Aorta (tissue), 5 donors: ENCODE measurements at regions of chr19 and their contacts with region 1.

Region 1: DNA sequence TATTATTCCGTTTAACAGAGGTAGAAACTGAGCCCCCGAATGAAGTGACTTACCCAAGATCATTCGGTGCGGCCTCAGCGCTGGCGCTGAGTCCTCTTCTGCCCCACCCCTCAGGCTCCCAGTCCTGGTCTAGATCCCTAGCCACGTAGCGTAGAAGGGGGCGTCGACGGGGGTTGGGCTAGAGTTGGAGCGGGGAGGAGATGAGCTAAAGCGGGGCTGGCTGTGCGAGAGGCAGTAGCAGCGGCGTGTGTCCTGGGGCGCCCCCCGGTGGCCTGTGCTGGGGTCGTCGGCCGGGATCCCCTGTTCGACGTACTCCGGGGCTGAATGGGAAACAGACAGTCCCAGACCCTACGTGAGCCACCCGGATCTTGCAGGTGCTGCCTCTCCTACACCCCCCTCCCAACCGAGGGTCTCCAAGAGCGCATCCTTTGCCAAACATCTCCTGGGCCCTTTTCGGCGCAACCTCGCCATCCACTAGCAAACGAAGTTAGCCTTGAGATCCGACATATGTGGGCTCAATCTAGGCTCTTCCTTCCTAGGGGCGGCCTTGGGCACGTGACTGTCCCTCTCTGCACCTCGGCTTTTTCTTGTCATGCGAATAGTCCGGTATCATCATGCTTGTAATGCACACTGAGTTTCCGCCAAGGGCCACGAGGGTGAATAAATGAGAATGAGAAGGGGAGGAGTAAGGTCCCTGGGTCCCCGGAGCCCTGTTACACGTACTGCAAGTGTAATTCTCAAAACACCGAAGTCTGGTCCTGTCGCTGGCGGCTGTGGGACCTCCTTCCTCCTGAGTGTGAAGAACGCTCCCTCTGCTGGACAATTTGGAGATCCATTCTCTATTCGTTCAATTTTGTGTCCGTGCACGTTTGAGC is 47.7 kb downstream of the CYP4F22 start:
- DNase-seq: peak; percentile 94 to 98
- ATAC-seq: peak; percentile 93
- H3K4me3 ChIP-seq: peak overlapping the region in 1 of 2 donors; percentile 50
- H3K27ac ChIP-seq: peak overlapping the region in 1 of 2 donors; percentile 73
- H3K4me1 ChIP-seq: no peaks in the 10 kb centered on the region
- H3K27me3 ChIP-seq: no peaks in the 10 kb centered on the region

Region 2: GRCh38 chr19:15091901-15092753 is 463.9 kb before region 1 on chr19:
- intact Hi-C with region 1: loop called (anchors 2 to 5 kb)
- DNase-seq: no peak
- ATAC-seq: peak; percentile 76
- H3K4me3 ChIP-seq: no peak overlapping the region
- H3K27ac ChIP-seq: no peak overlapping the region
- H3K4me1 ChIP-seq: no peaks in the 10 kb centered on the region
- H3K27me3 ChIP-seq: no peaks in the 10 kb centered on the region

Region 3: DNA sequence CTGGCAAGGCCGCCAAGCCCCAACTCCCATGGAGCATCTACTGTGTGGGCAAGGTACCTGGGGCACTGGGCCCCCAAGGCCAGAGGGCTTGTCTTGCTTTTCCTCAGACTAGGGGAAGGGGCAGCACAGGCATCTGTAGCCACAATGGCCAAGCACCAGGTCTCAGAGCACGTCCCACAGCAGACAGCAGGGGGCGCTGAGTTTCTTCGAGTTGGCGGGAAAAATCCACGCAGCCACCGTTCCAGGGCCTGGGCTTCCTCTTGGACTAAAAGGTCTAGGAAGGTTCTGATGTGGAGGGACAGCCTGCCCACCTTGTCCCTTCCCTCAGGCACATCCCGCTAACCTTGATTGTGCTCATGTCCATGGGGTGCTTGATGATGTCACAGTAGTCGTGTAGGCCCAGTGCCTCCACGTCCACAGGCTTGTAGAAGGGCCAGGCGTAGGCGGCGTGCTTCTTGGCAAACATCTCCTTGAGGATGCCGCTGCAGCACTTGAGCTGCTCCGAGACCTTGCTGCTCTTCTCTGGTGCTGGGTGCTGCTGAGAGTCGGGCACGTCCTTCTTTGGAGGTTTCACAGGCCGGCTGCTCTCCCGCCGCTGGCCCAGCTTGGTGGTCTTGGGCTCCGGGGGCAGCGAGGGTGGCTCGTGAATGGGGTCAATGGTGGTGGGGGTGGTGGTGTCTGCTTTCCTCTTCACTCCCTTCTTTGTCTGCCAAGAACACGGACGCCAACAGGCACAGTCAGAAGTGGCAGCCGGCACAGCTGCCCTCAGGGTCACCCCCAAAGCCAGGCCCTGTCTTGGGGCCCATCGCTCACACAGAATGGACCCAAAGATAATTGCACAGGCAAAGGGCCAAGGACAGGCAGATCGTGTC is 291.7 kb before region 1 on chr19:
- intact Hi-C with region 1: loop called (anchors 2 to 5 kb)
- DNase-seq: peak; percentile 86 to 94
- ATAC-seq: peak; percentile 63
- H3K4me3 ChIP-seq: no peak overlapping the region
- H3K27ac ChIP-seq: peak overlapping the region in 1 of 2 donors; percentile 39
- H3K4me1 ChIP-seq: no peaks in the 10 kb centered on the region
- H3K27me3 ChIP-seq: no peaks in the 10 kb centered on the region

Region 4: GRCh38 chr19:15418588-15419412 is 137.2 kb before region 1 on chr19 and contains the start of gene AKAP8L:
- intact Hi-C with region 1: loop called (anchors 5 to 10 kb)
- DNase-seq: peak; percentile 99
- ATAC-seq: peak; percentile 97
- H3K4me3 ChIP-seq: peak within 1 kb of the TSS; percentile 77 to 86
- H3K27ac ChIP-seq: peak within 1 kb of the TSS; percentile 62 to 93
- H3K4me1 ChIP-seq: no peaks in the 10 kb centered on the region
- H3K27me3 ChIP-seq: no peaks in the 10 kb centered on the region
- total RNA-seq, gene AKAP8L: 70.8 to 106 TPM

Region 5: GRCh38 chr19:15463861-15464371 is 92.1 kb before region 1 on chr19:
- intact Hi-C with region 1: loop called in 1 of 2 experiments (anchors 5 kb)
- DNase-seq: peak in 1 of 2 donors; percentile 66
- ATAC-seq: peak; percentile 50
- H3K4me3 ChIP-seq: no peak overlapping the region
- H3K27ac ChIP-seq: no peak overlapping the region
- H3K4me1 ChIP-seq: no peaks in the 10 kb centered on the region
- H3K27me3 ChIP-seq: no peaks in the 10 kb centered on the region

Region 6: DNA sequence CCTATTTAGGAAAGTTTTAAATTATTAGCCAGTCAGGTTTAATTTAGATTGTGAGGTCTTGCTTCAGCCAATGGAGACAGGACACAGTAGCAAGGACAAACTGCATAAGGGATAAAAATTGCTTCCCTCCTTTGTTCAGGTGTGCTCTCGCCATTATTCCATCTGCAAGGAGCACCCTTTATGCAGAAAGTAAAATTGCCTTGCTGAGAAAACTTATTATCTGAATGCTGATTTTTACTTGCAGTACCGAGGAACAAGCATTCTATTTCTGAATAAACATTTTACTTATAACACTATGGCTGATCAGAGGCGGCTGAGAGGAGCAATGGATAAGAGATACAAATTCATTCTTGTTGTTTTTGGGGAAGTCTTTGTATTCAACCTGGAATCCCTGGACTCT is 39.6 kb before region 1 on chr19:
- intact Hi-C with region 1: no loop called
- DNase-seq: no peak
- ATAC-seq: no peak
- H3K4me3 ChIP-seq: no peak overlapping the region
- H3K27ac ChIP-seq: no peak overlapping the region
- H3K4me1 ChIP-seq: no peaks in the 10 kb centered on the region
- H3K27me3 ChIP-seq: no peaks in the 10 kb centered on the region

Region 7: GRCh38 chr19:15587663-15588062 is 31.7 kb after region 1 on chr19:
- intact Hi-C with region 1: no loop called
- DNase-seq: peak in 1 of 2 donors; percentile 70
- ATAC-seq: no peak
- H3K4me3 ChIP-seq: no peak overlapping the region
- H3K27ac ChIP-seq: no peak overlapping the region
- H3K4me1 ChIP-seq: no peaks in the 10 kb centered on the region
- H3K27me3 ChIP-seq: no peaks in the 10 kb centered on the region